ENCODE measurements at regions of chr11 and their contacts with region 1.

Region 1: DNA sequence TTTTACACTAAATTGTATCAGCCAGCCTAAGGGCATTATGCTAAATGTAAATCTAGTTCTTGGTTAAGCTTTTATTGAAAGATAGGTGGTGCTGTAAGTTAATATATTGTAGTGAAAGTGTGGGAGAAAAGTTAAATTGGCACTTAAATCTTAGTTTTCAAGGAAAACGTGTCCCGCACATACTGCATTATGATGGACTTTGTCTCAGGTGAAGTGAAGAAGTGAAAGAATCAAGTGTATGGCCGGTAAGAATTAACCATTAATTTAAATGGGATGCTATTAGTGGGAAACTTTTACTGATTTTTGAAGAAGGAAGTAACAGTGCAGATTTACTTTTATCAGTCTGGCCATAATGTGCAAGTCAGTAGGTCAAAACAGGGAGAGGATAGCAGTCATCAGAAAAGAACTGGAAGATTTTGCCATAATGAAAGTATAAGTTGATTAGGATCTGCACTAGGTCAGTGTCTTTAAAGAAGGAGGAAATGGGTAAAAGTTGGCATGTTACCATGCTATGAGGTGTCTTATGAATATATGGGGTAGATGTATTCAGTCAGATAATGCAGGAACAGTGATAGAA is 81.6 kb downstream of the PDHX start:
- DNase-seq: peak in 1 of 2 experiments; percentile 71
- H3K4me3 ChIP-seq: no peak overlapping the region
- H3K27ac ChIP-seq: peak overlapping the region; percentile 47
- H3K4me1 ChIP-seq: peaks cover 11% of the 10 kb centered on the region
- H3K27me3 ChIP-seq: no peaks in the 10 kb centered on the region
- CTCF ChIP-seq: peak; percentile 92

Region 2: DNA sequence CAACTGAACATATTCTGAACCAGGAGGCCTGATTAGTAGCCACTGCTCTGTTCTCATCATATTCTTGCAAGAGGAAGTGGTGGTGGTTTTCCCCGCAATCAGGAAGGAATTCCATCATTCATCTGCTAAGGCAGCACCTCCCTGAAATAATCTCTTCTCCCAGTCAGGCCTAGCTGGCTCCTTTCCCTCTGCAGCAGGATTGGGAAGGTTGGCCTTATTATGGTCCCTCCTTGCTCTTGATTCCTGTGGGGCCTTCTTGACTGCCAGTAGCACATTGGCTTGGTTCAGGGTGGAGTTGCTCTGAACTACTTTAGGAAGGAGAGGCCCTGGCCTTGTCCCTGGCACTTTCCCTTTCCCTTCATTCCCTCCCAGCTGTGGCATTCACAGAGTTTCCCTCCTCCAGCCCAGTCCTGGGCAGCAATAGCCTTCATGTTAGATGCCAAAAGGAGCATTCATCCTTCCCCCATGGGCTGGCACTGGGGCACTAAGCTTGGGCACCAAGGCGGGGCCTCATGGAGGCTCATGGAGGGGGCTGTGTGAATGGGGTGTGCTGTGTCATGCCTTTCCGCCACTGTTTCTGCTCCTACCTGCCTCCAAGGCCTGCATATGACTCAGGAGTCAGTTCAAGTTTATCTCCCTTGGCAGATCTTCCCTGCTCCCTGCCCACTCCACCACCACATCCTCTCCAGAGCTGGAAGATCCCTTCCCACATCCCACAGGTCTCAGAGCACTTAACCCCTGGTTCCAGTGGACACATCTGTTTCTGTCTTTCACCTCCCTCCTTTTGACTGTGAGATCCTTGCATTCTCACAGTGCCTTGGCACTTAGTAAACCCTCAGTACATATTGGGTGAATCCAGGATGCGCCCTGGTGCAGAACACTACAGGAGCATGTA is 113.4 kb after region 1 on chr11:
- CTCF ChIA-PET with region 1: interaction called, 3 read pairs
- POLR2A ChIA-PET with region 1: no interaction called
- intact Hi-C with region 1: loop called (anchors 1 kb)
- DNase-seq: peak; percentile 87 to 88
- H3K4me3 ChIP-seq: no peak overlapping the region
- H3K27ac ChIP-seq: peak overlapping the region; percentile 82
- H3K4me1 ChIP-seq: peaks cover 43% of the 10 kb centered on the region
- H3K27me3 ChIP-seq: no peaks in the 10 kb centered on the region
- CTCF ChIP-seq: no peak

Region 3: DNA sequence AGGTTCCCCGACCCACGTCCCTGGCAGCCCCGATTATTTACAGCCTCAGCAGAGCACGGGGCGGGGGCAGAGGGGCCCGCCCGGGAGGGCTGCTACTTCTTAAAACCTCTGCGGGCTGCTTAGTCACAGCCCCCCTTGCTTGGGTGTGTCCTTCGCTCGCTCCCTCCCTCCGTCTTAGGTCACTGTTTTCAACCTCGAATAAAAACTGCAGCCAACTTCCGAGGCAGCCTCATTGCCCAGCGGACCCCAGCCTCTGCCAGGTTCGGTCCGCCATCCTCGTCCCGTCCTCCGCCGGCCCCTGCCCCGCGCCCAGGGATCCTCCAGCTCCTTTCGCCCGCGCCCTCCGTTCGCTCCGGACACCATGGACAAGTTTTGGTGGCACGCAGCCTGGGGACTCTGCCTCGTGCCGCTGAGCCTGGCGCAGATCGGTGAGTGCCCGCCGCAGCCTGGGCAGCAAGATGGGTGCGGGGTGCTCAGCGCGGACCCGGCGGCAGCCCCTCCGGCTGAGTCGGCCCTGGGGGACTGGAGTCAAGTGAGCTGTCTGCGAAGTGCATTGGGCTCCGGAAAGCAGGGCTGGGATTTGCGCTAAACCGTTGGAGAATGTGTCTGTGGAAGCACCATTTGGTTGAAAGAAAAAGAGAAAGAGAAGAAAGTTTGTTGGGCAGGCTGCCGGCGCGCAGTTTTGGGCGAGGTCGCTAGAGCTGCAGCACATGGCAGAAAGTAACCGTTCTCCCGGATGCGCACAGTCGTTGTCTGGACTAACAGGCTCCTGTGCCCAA is 141.1 kb after region 1 on chr11 and contains the start of gene CD44:
- CTCF ChIA-PET with region 1: no interaction called
- POLR2A ChIA-PET with region 1: no interaction called
- intact Hi-C with region 1: loop called (anchors 1 kb)
- DNase-seq: peak; percentile 72 to 84
- H3K4me3 ChIP-seq: peak within 1 kb of the TSS; percentile 70
- H3K27ac ChIP-seq: peak within 1 kb of the TSS; percentile 91
- H3K4me1 ChIP-seq: peaks cover 66% of the 10 kb centered on the region
- H3K27me3 ChIP-seq: no peaks in the 10 kb centered on the region
- CTCF ChIP-seq: no peak
- total RNA-seq, gene CD44: 775 and 872 TPM in 2 replicates

Region 4: DNA sequence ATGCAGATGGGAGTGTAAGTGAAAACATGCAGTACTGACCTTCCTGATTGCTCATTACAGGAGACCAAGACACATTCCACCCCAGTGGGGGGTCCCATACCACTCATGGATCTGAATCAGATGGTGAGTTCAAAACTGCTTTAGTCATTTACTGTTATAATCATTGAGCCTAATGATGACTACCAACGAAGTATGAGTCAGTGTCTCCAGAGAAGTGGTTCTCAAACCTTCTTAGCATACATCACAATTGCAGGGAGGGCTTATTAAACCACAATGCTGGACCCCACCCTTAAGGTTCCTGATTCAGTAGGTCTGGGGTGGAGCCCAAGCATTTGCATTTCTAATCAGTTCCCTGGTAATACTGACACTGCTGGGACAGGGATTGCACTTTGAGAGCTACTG is 216.8 kb after region 1 on chr11:
- CTCF ChIA-PET with region 1: no interaction called
- POLR2A ChIA-PET with region 1: no interaction called
- intact Hi-C with region 1: loop called (anchors 5 kb)
- DNase-seq: peak; percentile 58 to 89
- H3K4me3 ChIP-seq: no peak overlapping the region
- H3K27ac ChIP-seq: peak overlapping the region; percentile 64
- H3K4me1 ChIP-seq: peaks cover 67% of the 10 kb centered on the region
- H3K27me3 ChIP-seq: no peaks in the 10 kb centered on the region
- CTCF ChIP-seq: no peak

Region 5: GRCh38 chr11:35237860-35238715 is 240.0 kb after region 1 on chr11:
- CTCF ChIA-PET with region 1: interaction called, 4 read pairs
- POLR2A ChIA-PET with region 1: no interaction called
- intact Hi-C with region 1: loop called (anchors 2 kb)
- DNase-seq: no peak
- H3K4me3 ChIP-seq: no peak overlapping the region
- H3K27ac ChIP-seq: no peak overlapping the region
- H3K4me1 ChIP-seq: peaks cover 33% of the 10 kb centered on the region
- H3K27me3 ChIP-seq: no peaks in the 10 kb centered on the region
- CTCF ChIP-seq: peak; percentile 82

Region 6: DNA sequence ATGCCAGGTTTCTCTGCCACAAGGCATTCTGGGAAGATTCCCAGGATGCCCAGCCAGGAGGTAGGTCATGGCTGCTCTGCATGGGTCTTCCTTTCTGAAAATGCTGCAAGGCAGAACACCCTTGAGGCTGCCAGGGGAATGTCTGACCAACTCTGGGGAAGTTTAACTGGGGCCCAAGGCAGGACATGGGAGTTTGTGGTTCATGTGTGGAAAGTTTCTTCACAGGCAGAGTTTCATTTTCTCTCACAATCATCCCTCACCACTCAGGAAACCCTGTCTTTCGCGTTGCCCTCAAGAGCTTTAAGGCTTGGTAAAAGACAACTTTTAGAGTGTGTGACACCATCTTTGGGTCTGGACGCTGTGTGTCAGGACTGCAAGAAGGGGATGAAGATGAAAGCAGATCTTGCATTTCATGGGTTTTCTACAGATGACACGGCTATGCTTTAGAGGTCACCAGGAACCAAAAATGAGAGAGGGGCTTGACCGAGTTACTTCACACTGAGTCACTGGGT is 274.4 kb after region 1 on chr11:
- CTCF ChIA-PET with region 1: no interaction called
- POLR2A ChIA-PET with region 1: no interaction called
- intact Hi-C with region 1: no loop called
- DNase-seq: no peak
- H3K4me3 ChIP-seq: no peak overlapping the region
- H3K27ac ChIP-seq: no peak overlapping the region
- H3K4me1 ChIP-seq: peaks cover 21% of the 10 kb centered on the region
- H3K27me3 ChIP-seq: no peaks in the 10 kb centered on the region
- CTCF ChIP-seq: no peak